ENCODE measurements at regions of chr2 and their contacts with region 1.

Region 1: GRCh38 chr2:185738679-185739472 is at the start of gene FSIP2:
- DNase-seq: peak; percentile 97
- ATAC-seq: peak; percentile 89
- H3K4me3 Mint-ChIP-seq: peak within 1 kb of the TSS; percentile 75
- H3K27ac Mint-ChIP-seq: no peak within 1 kb of the TSS
- H3K4me1 Mint-ChIP-seq: peaks cover 40% of the 10 kb centered on the region
- H3K27me3 Mint-ChIP-seq: peaks cover 4% of the 10 kb centered on the region; the same call in 1 of the 2 replicates
- CTCF ChIP-seq: peak; percentile 96
- total RNA-seq, gene FSIP2: 1.9 to 2.2 TPM (median 1.9 TPM) in 3 replicates

Region 2: DNA sequence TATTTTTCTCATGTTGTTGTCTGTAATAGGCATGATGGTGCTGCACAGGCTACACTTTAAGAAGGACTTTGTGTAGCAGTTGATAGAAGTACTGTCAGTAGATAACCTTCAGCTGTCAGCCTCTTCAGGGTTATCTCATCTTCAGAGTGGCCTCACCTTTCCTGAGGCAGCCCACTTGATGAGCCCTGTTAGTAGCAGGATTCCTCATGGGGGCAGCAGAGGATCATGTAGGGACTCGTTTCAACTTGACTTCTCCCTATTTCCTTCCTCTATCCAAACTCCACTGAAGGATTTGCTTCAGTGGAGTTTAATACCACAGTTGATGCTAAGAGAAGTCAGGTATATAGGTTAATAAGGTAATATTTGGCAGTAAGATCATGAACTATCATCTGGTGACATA is 530.6 kb before region 1 on chr2:
- CTCF ChIA-PET with region 1: interaction called, 18 read pairs
- POLR2A ChIA-PET with region 1: no interaction called
- DNase-seq: peak; percentile 73
- ATAC-seq: peak; percentile 97
- H3K4me3 Mint-ChIP-seq: no peak overlapping the region
- H3K27ac Mint-ChIP-seq: no peak overlapping the region
- H3K4me1 Mint-ChIP-seq: no peaks in the 10 kb centered on the region
- H3K27me3 Mint-ChIP-seq: no peaks in the 10 kb centered on the region
- CTCF ChIP-seq: peak; percentile 41; the same call in 1 of the 2 replicates

Region 3: GRCh38 chr2:185338104-185338503 is 400.8 kb before region 1 on chr2:
- CTCF ChIA-PET with region 1: interaction called, 40 read pairs
- POLR2A ChIA-PET with region 1: no interaction called
- DNase-seq: no peak
- ATAC-seq: no peak
- H3K4me3 Mint-ChIP-seq: no peak overlapping the region
- H3K27ac Mint-ChIP-seq: no peak overlapping the region
- H3K4me1 Mint-ChIP-seq: no peaks in the 10 kb centered on the region
- H3K27me3 Mint-ChIP-seq: no peaks in the 10 kb centered on the region
- CTCF ChIP-seq: no peak

Region 4: DNA sequence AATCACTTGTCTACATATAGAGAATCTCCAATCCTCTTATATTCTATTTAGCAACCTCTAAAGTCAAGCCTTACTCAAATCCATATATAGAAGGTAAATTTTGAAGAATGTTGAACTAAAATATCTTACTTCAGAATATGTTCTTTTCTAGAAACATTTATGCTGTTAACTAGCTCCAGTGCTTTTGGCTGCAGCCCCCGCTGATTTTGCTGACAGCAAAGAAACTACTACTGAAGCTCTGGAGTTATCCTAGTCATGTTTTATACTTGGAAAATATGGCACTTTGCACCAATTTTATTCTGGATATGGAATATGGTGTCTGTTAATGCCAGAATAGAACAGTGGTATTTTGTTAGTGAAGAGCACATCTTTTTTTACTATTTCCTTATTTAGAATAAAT is 212.7 kb before region 1 on chr2:
- CTCF ChIA-PET with region 1: interaction called, 14 read pairs
- POLR2A ChIA-PET with region 1: no interaction called
- DNase-seq: no peak
- ATAC-seq: no peak
- H3K4me3 Mint-ChIP-seq: no peak overlapping the region
- H3K27ac Mint-ChIP-seq: no peak overlapping the region
- H3K4me1 Mint-ChIP-seq: peaks cover 9% of the 10 kb centered on the region
- H3K27me3 Mint-ChIP-seq: no peaks in the 10 kb centered on the region
- CTCF ChIP-seq: no peak

Region 5: GRCh38 chr2:185618625-185619024 is 120.3 kb before region 1 on chr2:
- CTCF ChIA-PET with region 1: interaction called, 17 read pairs
- POLR2A ChIA-PET with region 1: no interaction called
- DNase-seq: no peak
- ATAC-seq: peak; percentile 96
- H3K4me3 Mint-ChIP-seq: no peak overlapping the region
- H3K27ac Mint-ChIP-seq: no peak overlapping the region
- H3K4me1 Mint-ChIP-seq: no peaks in the 10 kb centered on the region
- H3K27me3 Mint-ChIP-seq: no peaks in the 10 kb centered on the region
- CTCF ChIP-seq: no peak

Region 6: DNA sequence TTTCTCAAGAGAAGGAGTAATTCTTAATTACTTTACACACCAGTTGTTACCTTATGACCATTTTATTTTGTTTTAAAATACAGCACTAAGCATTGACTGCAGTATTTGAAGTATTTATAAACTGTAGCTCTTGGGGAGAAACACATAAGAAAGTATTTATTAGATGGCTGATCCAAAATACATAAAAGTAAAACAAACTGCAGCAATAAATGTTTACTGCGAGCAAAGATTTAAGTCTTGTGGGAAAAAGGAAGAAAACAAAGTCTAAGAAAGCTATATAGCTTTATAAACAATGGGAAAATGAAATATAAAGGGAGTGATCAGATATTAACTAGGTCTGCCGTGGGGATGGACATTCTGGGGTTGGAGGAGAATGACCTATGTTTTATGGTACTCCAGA is 400.0 kb after region 1 on chr2:
- CTCF ChIA-PET with region 1: no interaction called
- POLR2A ChIA-PET with region 1: no interaction called
- DNase-seq: no peak
- ATAC-seq: no peak
- H3K4me3 Mint-ChIP-seq: no peak overlapping the region
- H3K27ac Mint-ChIP-seq: no peak overlapping the region
- H3K4me1 Mint-ChIP-seq: peaks cover 6% of the 10 kb centered on the region
- H3K27me3 Mint-ChIP-seq: no peaks in the 10 kb centered on the region
- CTCF ChIP-seq: no peak

Region 7: GRCh38 chr2:186460465-186460864 is 721.6 kb after region 1 on chr2:
- CTCF ChIA-PET with region 1: interaction called, 11 read pairs
- POLR2A ChIA-PET with region 1: no interaction called
- DNase-seq: no peak
- ATAC-seq: peak; percentile 61
- H3K4me3 Mint-ChIP-seq: no peak overlapping the region
- H3K27ac Mint-ChIP-seq: no peak overlapping the region
- H3K4me1 Mint-ChIP-seq: no peaks in the 10 kb centered on the region; the same call in 1 of the 2 replicates
- H3K27me3 Mint-ChIP-seq: no peaks in the 10 kb centered on the region
- CTCF ChIP-seq: 0 out of 2 replicates have a peak, but pooled peaks have one; percentile 12

Measured in WTC11 (cell line).